ENCODE measurements at regions of chr16 and their contacts with region 1.

Region 1: DNA sequence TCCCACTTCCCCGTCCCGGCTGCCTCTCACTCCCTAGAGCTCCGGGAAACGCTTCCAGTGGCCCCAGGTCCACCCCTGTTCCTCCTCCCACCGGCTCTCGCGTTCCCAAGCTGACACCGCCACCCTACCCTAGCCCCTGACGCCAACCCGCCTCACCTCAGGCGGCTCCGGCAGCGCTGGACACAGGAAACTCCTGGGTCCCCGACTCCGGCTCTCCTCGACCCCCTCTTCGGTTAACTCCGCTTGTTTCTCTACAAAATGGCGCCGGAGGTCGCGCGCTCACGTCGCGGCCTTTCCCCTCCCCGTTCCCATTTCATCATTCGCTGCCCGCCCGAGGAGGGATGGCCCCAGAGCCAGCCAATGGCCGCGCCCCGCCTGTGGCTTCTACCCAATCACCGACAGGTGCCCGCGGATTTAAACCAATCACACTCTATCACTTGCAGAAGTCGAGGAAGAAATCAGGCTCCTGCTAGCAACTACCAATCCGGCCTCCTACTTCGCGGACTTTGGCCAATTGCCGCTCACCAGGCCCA is at the start of gene CNOT1:
- DNase-seq: peak; percentile 99
- ATAC-seq: peak; percentile 94
- total RNA-seq, gene CNOT1: 68.3 TPM

Region 2: GRCh38 chr16:58336332-58337089 is 293.1 kb before region 1 on chr16:
- intact Hi-C with region 1: loop called (anchors 10 kb)
- DNase-seq: peak; percentile 90
- ATAC-seq: peak; percentile 82

Region 3: GRCh38 chr16:58515125-58515870 is 114.3 kb before region 1 on chr16 and contains the start of gene SETD6:
- intact Hi-C with region 1: loop called (anchors 10 kb)
- DNase-seq: peak; percentile 93
- ATAC-seq: peak; percentile 95
- total RNA-seq, gene SETD6: 14.4 TPM

Measured in Right ventricle myocardium superior (tissue), 1 donor.